ENCODE measurements at regions of chr10 and their contacts with region 1.

Region 1: GRCh38 chr10:122112625-122113160 is 123.7 kb downstream of the TACC2 start:
- DNase-seq: peak; percentile 88
- H3K4me3 ChIP-seq: peak overlapping the region; percentile 50 to 76 (median 67)
- H3K27ac ChIP-seq: peak overlapping the region; percentile 93 to 100 (median 96)
- H3K4me1 ChIP-seq: peaks cover 12 to 36% (median 25%) of the 10 kb centered on the region in 4 donors
- H3K27me3 ChIP-seq: no peaks in the 10 kb centered on the region
- CTCF ChIP-seq: peak in 4 of 5 experiments; percentile 6 to 57 (median 32)
- EP300 ChIP-seq: peak; percentile 37
- POLR2A ChIP-seq: peak; percentile 65

Region 2: GRCh38 chr10:121974535-121975294 is 138.0 kb before region 1 on chr10 and contains the start of gene NSMCE4A:
- in situ Hi-C with region 1: no loop called
- intact Hi-C with region 1: loop called (anchors 2 kb)
- DNase-seq: peak; percentile 82
- H3K4me3 ChIP-seq: peak within 1 kb of the TSS; percentile 84 to 99 (median 94)
- H3K27ac ChIP-seq: peak within 1 kb of the TSS; percentile 98 to 100 (median 100)
- H3K4me1 ChIP-seq: peaks cover 11 to 22% (median 19%) of the 10 kb centered on the region in 4 donors
- H3K27me3 ChIP-seq: no peaks in the 10 kb centered on the region
- CTCF ChIP-seq: peak in 4 of 5 experiments; percentile 66 to 75 (median 70)
- EP300 ChIP-seq: no peak
- POLR2A ChIP-seq: peak; percentile 79
- total RNA-seq, gene NSMCE4A: 71.1 to 152 (median 92.7) TPM

Region 3: DNA sequence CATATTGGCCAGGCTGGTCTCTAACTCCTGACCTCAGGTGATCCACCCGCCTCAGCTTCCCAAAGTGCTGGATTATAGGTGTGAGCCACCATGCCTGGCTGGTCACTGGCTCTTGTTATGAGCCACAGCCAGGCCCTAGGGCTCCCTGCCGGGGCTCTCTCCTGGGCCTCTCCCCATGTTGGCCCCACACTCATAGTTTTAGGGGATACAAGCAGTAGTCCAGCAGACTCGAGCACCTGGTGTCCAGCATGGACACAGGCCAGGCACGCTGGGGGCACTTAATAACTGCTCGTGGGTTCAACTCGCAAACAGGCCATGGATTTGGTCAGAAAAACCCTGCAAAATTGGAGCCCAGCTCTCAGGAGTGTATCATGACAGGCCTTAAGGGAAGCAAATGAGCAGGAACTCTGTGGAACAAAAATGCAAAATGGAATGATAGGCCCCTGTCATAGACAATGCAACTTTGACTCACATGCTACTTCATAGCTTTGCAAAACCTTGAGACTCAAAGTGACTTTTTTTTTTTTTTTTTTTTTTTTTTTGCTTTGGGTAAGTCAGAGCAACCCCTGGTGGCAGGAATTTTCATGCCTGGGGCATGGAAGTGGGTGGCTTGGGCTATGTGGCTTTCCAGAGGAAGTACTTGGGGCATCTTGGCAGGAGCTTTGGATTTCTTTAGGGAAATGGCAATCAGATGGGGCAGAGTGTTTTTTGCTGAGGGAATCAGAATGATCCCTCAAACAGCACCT is 61.3 kb before region 1 on chr10:
- in situ Hi-C with region 1: no loop called
- intact Hi-C with region 1: loop called (anchors 5 kb)
- DNase-seq: peak; percentile 75
- H3K4me3 ChIP-seq: no peak overlapping the region
- H3K27ac ChIP-seq: peak overlapping the region; percentile 52 to 75 (median 66)
- H3K4me1 ChIP-seq: peaks cover 0 to 20% (median 6%) of the 10 kb centered on the region in 4 donors
- H3K27me3 ChIP-seq: no peaks in the 10 kb centered on the region
- CTCF ChIP-seq: peak; percentile 63 to 73 (median 68)
- EP300 ChIP-seq: no peak
- POLR2A ChIP-seq: no peak